Common myeloid progenitor, CD34-positive (primary cell): ENCODE measurements at regions of chr15 and their contacts with region 1.

Region 1: DNA sequence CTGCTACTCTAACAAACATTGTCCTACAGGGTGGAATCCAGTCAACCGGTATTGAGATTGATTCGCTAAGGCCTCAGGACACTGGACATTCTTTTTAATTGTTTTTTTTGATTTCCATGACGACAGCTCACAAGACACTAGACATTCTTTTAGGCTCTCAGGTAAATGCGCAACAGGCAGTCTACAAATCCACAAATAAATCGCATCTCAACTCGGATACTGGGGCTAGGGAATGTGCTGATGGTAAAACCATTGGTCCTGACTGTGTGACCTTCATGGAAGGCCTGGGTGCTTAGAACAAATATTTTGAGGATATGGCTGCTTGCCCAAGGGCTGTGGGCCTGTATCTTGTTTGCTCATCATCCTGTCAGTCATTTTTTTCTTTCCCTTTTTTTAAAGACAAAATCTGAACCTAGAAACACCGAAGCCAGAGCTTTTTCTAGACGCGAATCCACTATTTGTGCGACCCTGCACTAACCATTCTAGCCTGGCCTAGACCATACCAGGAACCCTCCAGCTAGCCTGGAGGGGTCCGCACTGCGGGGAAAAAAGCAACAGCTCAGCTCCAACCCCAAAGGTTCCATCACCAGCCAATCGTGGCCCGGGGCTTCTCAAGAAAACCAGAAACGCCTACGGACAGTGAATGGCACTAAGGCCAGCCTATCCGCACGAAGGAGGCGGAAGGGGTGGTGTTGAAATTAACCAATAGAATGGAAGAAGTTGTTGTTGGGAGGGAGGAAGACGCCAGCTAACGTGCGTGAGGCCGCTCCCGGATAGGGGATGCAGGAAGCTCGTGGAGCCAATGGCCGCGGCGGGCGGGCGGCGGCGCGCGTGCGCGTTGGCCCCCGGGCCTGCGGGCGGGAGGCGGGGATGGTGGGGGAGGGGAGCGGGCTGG is 18.1 kb upstream of the CHD2 start:
- DNase-seq: peak; percentile 99 to 100 (median 100)
- H3K4me3 ChIP-seq: peak overlapping the region in 6 of 7 experiments; percentile 48 to 91 (median 66)
- H3K27ac ChIP-seq: peak overlapping the region; percentile 81 to 97
- H3K4me1 ChIP-seq: peaks cover 19 to 46% (median 39%) of the 10 kb centered on the region in 4 experiments
- H3K27me3 ChIP-seq: no peaks in the 10 kb centered on the region

Region 2: GRCh38 chr15:92069308-92070250 is 812.5 kb before region 1 on chr15:
- CTCF ChIA-PET with region 1: no interaction called
- POLR2A ChIA-PET with region 1: interaction called, 10 read pairs
- DNase-seq: peak; percentile 85 to 94 (median 92)
- H3K4me3 ChIP-seq: peak overlapping the region in 6 of 7 experiments; percentile 43 to 73 (median 53)
- H3K27ac ChIP-seq: peak overlapping the region; percentile 56 to 73
- H3K4me1 ChIP-seq: peaks cover 9 to 66% (median 56%) of the 10 kb centered on the region in 4 experiments
- H3K27me3 ChIP-seq: no peaks in the 10 kb centered on the region

Region 3: DNA sequence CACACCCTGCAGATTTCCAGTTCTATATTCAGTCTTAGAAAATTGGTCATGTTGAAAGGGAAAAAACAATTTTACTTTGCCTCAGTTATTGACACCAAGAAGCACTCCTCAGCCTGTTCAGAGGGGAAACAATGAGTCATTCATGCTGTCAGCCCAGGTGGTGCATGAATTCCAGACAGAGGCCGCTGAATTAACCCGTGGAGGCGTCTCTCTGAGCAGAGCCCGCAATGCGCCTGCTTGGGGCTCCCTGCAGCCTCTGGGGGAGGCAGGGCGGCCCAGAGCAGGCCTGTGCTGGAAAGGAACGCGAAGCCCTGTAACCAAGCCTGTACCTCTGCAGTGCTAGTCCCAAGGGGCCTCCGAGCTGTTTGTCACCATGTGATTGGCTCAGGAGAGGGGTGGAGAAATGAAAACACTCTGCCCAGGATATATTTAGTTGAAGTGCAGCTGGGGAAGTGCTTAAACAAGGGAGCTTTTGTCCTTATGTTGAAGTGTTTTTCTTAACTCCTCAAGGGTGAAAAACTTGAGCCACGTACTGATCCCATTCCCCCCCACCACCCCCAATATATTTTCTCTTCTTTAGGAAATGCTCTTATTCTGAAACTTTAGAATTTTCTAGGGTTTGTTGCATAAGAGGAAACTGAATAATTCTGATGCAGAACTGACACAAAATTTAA is 50.3 kb before region 1 on chr15:
- CTCF ChIA-PET with region 1: interaction called, 8 read pairs
- POLR2A ChIA-PET with region 1: interaction called, 18 read pairs
- DNase-seq: peak; percentile 91 to 97 (median 95)
- H3K4me3 ChIP-seq: peak overlapping the region in 5 of 7 experiments; percentile 8 to 53 (median 42)
- H3K27ac ChIP-seq: peak overlapping the region; percentile 80 to 88
- H3K4me1 ChIP-seq: peaks cover 21 to 56% (median 39%) of the 10 kb centered on the region in 4 experiments
- H3K27me3 ChIP-seq: no peaks in the 10 kb centered on the region

Region 4: DNA sequence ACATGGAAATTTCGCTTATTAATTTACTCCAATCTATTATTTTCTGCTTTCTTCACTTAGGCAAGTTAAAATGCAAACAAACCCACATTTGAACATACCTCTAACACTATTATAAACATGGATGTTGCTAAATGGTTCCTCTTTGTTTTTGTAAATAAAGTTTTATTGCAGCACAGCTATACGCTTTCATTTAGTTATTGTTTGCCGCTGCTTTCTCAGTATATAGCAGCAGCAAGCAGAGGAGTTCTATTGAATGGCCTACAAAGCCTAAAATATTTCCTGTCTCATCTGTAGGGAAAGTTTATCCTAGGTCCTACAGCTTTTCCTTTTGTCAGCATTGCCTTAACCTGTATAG is 10.1 kb after region 1 on chr15:
- CTCF ChIA-PET with region 1: interaction called, 16 read pairs
- POLR2A ChIA-PET with region 1: interaction called, 8 read pairs
- DNase-seq: no peak
- H3K4me3 ChIP-seq: no peak overlapping the region
- H3K27ac ChIP-seq: no peak overlapping the region
- H3K4me1 ChIP-seq: peaks cover 0 to 12% (median 4%) of the 10 kb centered on the region in 4 experiments
- H3K27me3 ChIP-seq: no peaks in the 10 kb centered on the region

Region 5: GRCh38 chr15:92903941-92904831 is 22.1 kb after region 1 on chr15:
- CTCF ChIA-PET with region 1: interaction called, 9 read pairs
- POLR2A ChIA-PET with region 1: interaction called, 23 read pairs
- DNase-seq: peak; percentile 98 to 99 (median 99)
- H3K4me3 ChIP-seq: peak overlapping the region; percentile 30 to 100 (median 92)
- H3K27ac ChIP-seq: peak overlapping the region; percentile 99 to 100
- H3K4me1 ChIP-seq: peaks cover 46 to 65% (median 55%) of the 10 kb centered on the region in 4 experiments
- H3K27me3 ChIP-seq: no peaks in the 10 kb centered on the region